AG04450 (cell line): ENCODE measurements at regions of chr20 and their contacts with region 1.

Region 1: GRCh38 chr20:44111712-44112335 is 75.2 kb downstream of the JPH2 start:
- DNase-seq: no peak
- H3K4me3 ChIP-seq: no peak overlapping the region
- H3K27ac ChIP-seq: no peak overlapping the region
- H3K27me3 ChIP-seq: peaks cover 3% of the 10 kb centered on the region
- CTCF ChIP-seq: no peak

Region 2: GRCh38 chr20:44129911-44130718 is 18.3 kb after region 1 on chr20:
- CTCF ChIA-PET with region 1: interaction called, 32 read pairs
- POLR2A ChIA-PET with region 1: no interaction called
- DNase-seq: no peak
- H3K4me3 ChIP-seq: no peak overlapping the region
- H3K27ac ChIP-seq: no peak overlapping the region
- H3K27me3 ChIP-seq: no peaks in the 10 kb centered on the region
- CTCF ChIP-seq: no peak

Region 3: GRCh38 chr20:44137210-44137801 is 25.5 kb after region 1 on chr20:
- CTCF ChIA-PET with region 1: interaction called, 32 read pairs
- POLR2A ChIA-PET with region 1: no interaction called
- DNase-seq: peak; percentile 21
- H3K4me3 ChIP-seq: no peak overlapping the region
- H3K27ac ChIP-seq: peak overlapping the region; percentile 57
- H3K27me3 ChIP-seq: peaks cover 5% of the 10 kb centered on the region
- CTCF ChIP-seq: no peak

Region 4: GRCh38 chr20:44180814-44181213 is 69.0 kb after region 1 on chr20:
- CTCF ChIA-PET with region 1: interaction called, 26 read pairs
- POLR2A ChIA-PET with region 1: no interaction called
- DNase-seq: no peak
- H3K4me3 ChIP-seq: peak overlapping the region; percentile 7; the same call in 1 of the 2 replicates
- H3K27ac ChIP-seq: peak overlapping the region; percentile 73
- H3K27me3 ChIP-seq: no peaks in the 10 kb centered on the region
- CTCF ChIP-seq: no peak

Region 5: DNA sequence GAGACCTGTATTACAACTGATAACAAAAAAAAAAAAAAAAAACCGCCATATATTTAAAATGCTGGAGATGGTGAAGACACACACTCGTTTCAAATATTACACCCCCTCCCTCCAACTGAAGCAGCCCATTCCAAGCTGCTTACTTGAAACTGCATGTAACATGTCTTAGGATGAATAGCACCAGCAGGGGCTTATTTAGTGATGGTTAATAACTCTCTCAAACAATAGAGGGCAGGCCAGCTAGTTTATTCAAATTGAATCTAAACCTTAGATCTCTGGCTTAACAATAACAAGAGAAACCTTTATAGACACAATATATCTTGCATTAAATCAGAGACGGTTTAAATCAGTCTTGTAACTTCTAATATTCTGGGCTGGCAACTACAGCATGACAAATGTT is 84.4 kb after region 1 on chr20:
- CTCF ChIA-PET with region 1: interaction called, 402 read pairs
- POLR2A ChIA-PET with region 1: interaction called, 3 read pairs
- DNase-seq: no peak
- H3K4me3 ChIP-seq: no peak overlapping the region
- H3K27ac ChIP-seq: no peak overlapping the region
- H3K27me3 ChIP-seq: no peaks in the 10 kb centered on the region
- CTCF ChIP-seq: peak; percentile 36

Region 6: GRCh38 chr20:44310664-44311639 is 199.1 kb after region 1 on chr20 and contains the start of gene FITM2:
- CTCF ChIA-PET with region 1: interaction called, 31 read pairs
- POLR2A ChIA-PET with region 1: no interaction called
- DNase-seq: peak; percentile 95
- H3K4me3 ChIP-seq: peak within 1 kb of the TSS; percentile 99
- H3K27ac ChIP-seq: peak within 1 kb of the TSS; percentile 31
- H3K27me3 ChIP-seq: no peaks in the 10 kb centered on the region
- CTCF ChIP-seq: peak; percentile 93
- polyA plus RNA-seq, gene FITM2: 4.1 and 4.4 TPM in 2 replicates